ENCODE measurements at regions of chr2 and their contacts with region 1.

Region 1: DNA sequence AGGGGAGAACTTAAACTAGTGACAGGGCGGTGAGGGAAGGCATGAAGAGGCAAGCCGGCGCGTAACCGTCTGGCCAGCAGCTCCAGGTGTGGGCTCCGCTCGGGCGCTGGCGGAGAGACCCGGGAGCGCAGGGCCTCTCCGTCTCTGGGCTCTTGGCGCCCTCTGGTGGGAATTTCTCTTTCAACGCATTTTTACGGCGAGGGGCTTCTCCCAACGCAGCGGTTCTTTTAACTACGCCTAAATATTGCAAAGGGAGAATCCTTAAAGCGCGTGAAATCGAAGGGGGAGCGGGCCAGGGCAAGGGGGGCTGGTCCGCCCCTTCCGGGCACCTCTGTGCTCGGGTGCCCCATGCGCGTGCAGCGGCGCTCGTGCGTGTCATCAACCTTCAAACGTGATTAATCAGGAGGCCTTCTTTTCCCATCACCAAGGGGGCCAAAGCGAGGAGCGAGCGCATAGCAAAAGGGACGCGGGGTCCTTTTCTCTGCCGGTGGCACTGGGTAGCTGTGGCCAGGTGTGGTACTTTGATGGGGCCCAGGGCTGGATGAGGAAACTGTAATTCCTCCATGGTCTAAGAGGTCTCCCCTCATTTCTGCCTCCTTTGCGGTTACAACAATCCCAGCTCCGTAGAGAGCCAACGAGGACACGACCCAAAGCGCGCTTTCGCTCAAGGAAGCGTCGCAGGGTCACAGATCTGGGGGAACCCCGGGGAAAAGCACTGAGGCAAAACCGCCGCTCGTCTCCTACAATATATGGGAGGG is 762 bp upstream of the GAD1 start:
- H3K4me3 Mint-ChIP-seq: peak overlapping the region; percentile 75
- H3K27ac Mint-ChIP-seq: no peak overlapping the region
- H3K4me1 Mint-ChIP-seq: peaks cover 63% of the 10 kb centered on the region
- H3K27me3 Mint-ChIP-seq: peaks cover 90% of the 10 kb centered on the region

Region 2: DNA sequence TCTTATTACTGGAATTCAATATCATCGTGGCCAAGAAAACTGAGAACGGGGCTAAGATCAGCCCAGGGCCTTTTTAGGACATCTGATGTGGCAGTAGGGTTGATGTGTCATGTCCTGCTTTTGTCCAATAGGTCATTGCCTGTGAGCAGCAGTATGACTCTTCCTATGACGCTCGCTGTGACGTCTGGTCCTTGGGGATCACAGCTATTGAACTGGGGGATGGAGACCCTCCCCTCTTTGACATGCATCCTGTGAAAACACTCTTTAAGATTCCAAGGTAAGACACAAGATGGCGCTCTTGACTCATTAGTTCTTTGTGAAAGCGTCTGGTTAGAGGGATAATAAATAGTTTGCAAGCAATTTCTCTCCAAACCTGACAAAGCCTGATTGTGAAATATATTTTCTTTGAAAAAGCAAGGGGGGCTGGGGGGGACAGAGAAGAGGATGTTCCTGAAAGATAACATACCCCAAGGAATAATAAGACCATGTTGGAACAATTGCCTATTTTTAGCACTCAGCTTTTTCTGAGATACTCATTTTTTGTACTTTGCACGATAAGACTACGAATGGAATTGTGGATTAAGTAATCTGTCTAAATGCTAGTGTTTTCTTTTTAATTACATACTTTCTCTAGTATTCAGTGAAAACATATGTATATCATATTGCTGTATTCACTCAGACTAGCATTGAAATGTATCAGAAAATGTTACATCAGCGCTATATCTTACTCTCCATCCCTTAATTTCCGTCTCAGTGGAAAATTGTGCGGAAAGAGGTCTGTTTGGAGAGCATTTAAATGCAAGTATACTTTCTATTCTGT is 579.9 kb before region 1 on chr2:
- intact Hi-C with region 1: loop called (anchors 10 kb)
- H3K4me3 Mint-ChIP-seq: no peak overlapping the region
- H3K27ac Mint-ChIP-seq: no peak overlapping the region
- H3K4me1 Mint-ChIP-seq: no peaks in the 10 kb centered on the region
- H3K27me3 Mint-ChIP-seq: peaks cover 10% of the 10 kb centered on the region

Region 3: GRCh38 chr2:170361090-170361936 is 454.6 kb before region 1 on chr2:
- intact Hi-C with region 1: loop called (anchors 2 kb)
- H3K4me3 Mint-ChIP-seq: no peak overlapping the region
- H3K27ac Mint-ChIP-seq: no peak overlapping the region
- H3K4me1 Mint-ChIP-seq: peaks cover 5% of the 10 kb centered on the region
- H3K27me3 Mint-ChIP-seq: peaks cover 60% of the 10 kb centered on the region

Region 4: GRCh38 chr2:170396799-170397459 is 419.0 kb before region 1 on chr2:
- intact Hi-C with region 1: loop called (anchors 1 kb)
- H3K4me3 Mint-ChIP-seq: no peak overlapping the region
- H3K27ac Mint-ChIP-seq: no peak overlapping the region
- H3K4me1 Mint-ChIP-seq: no peaks in the 10 kb centered on the region
- H3K27me3 Mint-ChIP-seq: peaks cover 62% of the 10 kb centered on the region

Region 5: DNA sequence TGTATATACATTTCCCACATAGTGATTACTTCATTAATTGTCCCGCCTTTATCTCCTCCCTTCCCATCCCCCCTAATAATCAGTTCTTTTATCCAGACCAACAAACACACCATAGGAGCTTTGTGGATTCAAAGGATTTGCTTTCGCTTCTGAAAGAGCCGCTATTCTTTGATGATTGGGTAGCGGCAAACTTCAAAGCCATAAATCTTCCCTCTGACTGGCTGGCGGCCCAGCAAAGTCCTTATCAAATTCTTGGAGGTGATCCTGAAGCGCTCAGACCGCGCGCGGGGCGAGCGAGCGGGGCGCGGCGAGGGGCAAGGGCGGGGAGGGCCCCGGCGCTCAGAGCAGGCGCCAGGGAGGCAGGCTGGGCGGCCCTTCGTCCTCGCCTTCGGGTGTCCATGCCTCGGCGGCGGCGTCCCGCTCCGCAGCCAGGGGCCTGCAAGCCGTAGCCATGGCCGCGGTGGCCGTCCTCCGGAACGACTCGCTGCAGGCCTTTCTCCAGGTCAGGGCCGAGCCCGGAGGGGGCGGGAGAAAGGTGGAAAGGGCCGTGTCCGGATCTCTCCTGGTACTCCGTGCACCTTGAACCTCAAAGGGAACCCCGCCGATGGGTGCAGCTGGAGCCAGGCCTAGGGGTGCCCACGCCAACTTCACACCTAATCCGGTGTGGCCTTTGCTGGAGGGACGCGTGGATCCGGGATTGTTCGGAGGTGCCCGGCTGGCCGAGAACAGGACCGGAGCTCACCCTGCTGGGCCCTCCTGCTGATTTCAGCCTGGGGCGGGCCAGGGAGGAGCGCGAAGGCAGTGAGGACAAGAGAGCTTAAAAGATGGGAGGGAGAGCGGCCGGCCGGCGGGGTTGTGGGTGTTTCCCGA is 100.6 kb before region 1 on chr2 and contains the start of gene SP5:
- intact Hi-C with region 1: loop called (anchors 1 kb)
- H3K4me3 Mint-ChIP-seq: peak within 1 kb of the TSS; percentile 78
- H3K27ac Mint-ChIP-seq: no peak within 1 kb of the TSS
- H3K4me1 Mint-ChIP-seq: peaks cover 39% of the 10 kb centered on the region
- H3K27me3 Mint-ChIP-seq: peaks cover 88% of the 10 kb centered on the region

Measured in dendritic cell treated with granulocyte-macrophage colony-stimulating factor and Interleukin-4, amounts not matched to agents 40 ng/mL and 50 ng/mL, for 4 days (primary cell).